BJ (cell line): ENCODE measurements at regions of chr20 and their contacts with region 1.

Region 1: GRCh38 chr20:36932476-36933426 is 18.8 kb downstream of the SAMHD1 start:
- DNase-seq: peak; percentile 28
- H3K4me3 ChIP-seq: no peak overlapping the region
- H3K27me3 ChIP-seq: no peaks in the 10 kb centered on the region
- CTCF ChIP-seq: no peak

Region 2: GRCh38 chr20:36919715-36920333 is 12.9 kb before region 1 on chr20:
- CTCF ChIA-PET with region 1: interaction called, 4 read pairs
- POLR2A ChIA-PET with region 1: interaction called, 15 read pairs
- DNase-seq: no peak
- H3K4me3 ChIP-seq: no peak overlapping the region
- H3K27me3 ChIP-seq: no peaks in the 10 kb centered on the region
- CTCF ChIP-seq: peak; percentile 89